ENCODE measurements at regions of chr13 and their contacts with region 1.

Region 1: GRCh38 chr13:27533155-27533643 is 82.8 kb upstream of the MTIF3 start:
- DNase-seq: peak; percentile 61 to 67
- ATAC-seq: peak; percentile 78 to 89 (median 85)
- H3K4me3 ChIP-seq: peak overlapping the region; percentile 8
- H3K4me3 Mint-ChIP-seq: no peak overlapping the region
- H3K27ac ChIP-seq: no peak overlapping the region
- H3K27ac Mint-ChIP-seq: peak overlapping the region in 1 of 2 donors; percentile 43
- H3K4me1 ChIP-seq: peaks cover 10% of the 10 kb centered on the region
- H3K4me1 Mint-ChIP-seq: peaks cover 11 to 12% of the 10 kb centered on the region in 2 donors
- H3K27me3 ChIP-seq: no peaks in the 10 kb centered on the region
- H3K27me3 Mint-ChIP-seq: peaks cover 0 to 12% of the 10 kb centered on the region in 2 donors
- CTCF ChIP-seq: peak; percentile 79

Region 2: DNA sequence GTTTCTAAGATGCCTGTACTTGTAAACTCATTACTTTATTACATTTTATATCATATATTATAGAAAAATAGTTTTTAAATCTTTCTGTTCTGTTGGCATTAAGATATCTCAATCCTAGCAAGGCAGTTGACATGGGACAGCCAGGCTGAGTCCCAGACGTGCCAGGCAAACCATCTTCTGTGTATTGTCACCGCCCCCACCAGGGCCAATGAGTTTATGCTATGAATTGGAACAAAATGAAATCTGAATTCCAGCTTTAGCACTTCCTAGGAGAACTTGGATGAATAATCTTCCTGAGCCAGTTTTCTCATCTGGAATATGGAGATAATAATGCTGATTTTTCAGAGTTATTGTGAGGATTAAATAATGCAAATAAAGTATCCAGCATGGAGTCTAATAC is 179.2 kb after region 1 on chr13:
- intact Hi-C with region 1: loop called (anchors 5 kb)
- DNase-seq: peak in 1 of 2 donors; percentile 40
- ATAC-seq: peak in 1 of 3 donors; percentile 50
- H3K4me3 ChIP-seq: no peak overlapping the region
- H3K4me3 Mint-ChIP-seq: no peak overlapping the region
- H3K27ac ChIP-seq: no peak overlapping the region
- H3K27ac Mint-ChIP-seq: no peak overlapping the region
- H3K4me1 ChIP-seq: no peaks in the 10 kb centered on the region
- H3K4me1 Mint-ChIP-seq: no peaks in the 10 kb centered on the region
- H3K27me3 ChIP-seq: no peaks in the 10 kb centered on the region
- H3K27me3 Mint-ChIP-seq: peaks cover 7 to 16% of the 10 kb centered on the region in 2 donors
- CTCF ChIP-seq: peak; percentile 16

Measured in natural killer cell (primary cell).